ENCODE measurements at regions of chr7 and their contacts with region 1.

Region 1: DNA sequence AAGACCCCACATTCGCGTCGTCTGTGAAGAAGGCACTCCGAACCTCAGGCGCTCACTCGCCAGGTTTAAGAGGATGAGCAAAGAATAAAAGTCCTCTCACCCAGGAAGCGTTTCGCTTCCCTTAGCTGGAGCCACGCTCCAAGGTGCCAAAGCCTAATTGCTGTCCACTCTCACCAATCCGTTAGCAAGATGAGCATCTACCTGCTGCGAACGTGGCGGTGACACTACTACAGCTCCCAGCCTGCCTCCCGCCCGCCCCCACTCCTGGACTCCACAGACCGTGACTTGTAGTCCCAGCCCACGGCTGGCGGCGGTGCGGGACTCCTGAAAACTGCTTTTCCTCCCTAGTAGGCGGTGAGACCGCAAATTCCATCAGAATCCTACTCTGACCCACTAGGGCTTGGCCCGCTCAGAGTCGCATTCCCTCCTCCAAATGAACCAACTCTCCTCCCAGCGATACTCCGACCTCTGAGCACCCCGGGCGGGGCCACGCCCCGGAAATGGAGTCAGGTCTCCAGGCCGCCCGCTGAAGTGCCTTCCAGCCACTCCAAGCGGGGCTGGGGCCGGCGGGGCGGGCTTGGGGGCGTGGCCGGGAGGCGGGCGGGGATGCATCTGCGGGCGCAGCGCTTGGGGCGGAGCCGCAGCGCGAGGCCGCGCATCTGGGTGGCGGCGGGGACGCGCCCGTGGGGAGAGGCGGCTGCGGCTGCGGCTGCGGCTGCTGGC is 521 bp upstream of the PTPN12 start:
- DNase-seq: peak; percentile 74
- ATAC-seq: peak; percentile 92
- H3K4me3 ChIP-seq: peak overlapping the region; percentile 77
- H3K27ac ChIP-seq: peak overlapping the region; percentile 78
- H3K4me1 ChIP-seq: peaks cover 3% of the 10 kb centered on the region; the same call in 1 of the 2 replicates
- H3K27me3 ChIP-seq: no peaks in the 10 kb centered on the region
- CTCF ChIP-seq: no peak
- EP300 ChIP-seq: no peak
- POLR2A ChIP-seq: peak; percentile 92
- RAD21 ChIP-seq: no peak

Region 2: DNA sequence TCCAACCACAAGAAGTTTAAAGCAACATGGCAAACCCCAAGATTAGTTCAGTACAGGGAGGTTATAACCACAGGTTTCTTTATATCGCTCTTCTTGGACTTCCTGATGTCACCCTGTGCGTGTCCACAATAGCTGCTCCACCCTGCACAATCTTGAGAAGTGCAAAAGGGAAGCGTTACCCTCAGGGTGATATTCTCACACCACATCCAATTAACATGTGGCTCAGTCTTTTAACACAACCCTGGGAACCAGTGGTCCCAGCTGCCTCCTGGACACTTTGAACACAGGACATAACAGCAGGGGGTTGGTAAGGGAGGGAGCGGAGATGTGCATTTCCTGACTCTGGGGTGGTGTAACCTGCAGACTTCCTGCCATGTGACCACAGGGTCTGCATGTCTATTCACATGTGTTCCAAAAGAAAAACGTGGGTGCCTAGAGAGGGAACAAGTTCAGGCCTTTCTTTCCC is 185.0 kb before region 1 on chr7:
- CTCF ChIA-PET with region 1: no interaction called
- POLR2A ChIA-PET with region 1: no interaction called
- RAD21 ChIA-PET with region 1: no interaction called
- SMC1A ChIA-PET with region 1: no interaction called
- in situ Hi-C with region 1: no loop called
- intact Hi-C with region 1: loop called (anchors 5 kb)
- DNase-seq: peak; percentile 98
- ATAC-seq: peak; percentile 94
- H3K4me3 ChIP-seq: no peak overlapping the region
- H3K27ac ChIP-seq: peak overlapping the region; percentile 61
- H3K4me1 ChIP-seq: peaks cover 23% of the 10 kb centered on the region
- H3K27me3 ChIP-seq: no peaks in the 10 kb centered on the region
- CTCF ChIP-seq: no peak
- EP300 ChIP-seq: peak; percentile 91 to 92; a peak in 3 of 4 replicates
- POLR2A ChIP-seq: peak; percentile 56; the same call in 1 of the 2 replicates
- RAD21 ChIP-seq: 0 out of 2 replicates have a peak, but pooled peaks have one; percentile 1

Region 3: DNA sequence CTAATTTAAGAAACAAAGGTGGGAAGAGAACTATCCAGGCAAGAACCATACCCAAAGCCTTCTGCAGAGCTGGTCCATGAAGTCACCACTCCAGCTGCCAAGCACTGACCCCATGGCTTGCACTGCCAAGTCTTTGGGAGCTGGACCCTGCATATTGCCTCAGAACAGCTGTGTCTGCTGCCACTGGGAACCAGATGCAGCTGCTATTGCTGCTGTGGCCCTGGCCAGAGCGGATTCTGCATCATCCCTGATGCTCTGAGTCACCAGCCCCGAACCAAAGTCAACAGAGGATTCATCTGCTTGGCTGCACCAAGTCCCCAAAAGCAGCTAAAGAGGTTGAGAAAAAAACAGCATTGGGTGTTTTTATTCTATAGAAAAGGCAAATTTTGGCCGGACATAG is 81.2 kb before region 1 on chr7:
- CTCF ChIA-PET with region 1: no interaction called
- POLR2A ChIA-PET with region 1: interaction called, 6 read pairs
- RAD21 ChIA-PET with region 1: no interaction called
- SMC1A ChIA-PET with region 1: no interaction called
- in situ Hi-C with region 1: no loop called
- intact Hi-C with region 1: loop called (anchors 5 kb)
- DNase-seq: no peak
- ATAC-seq: no peak
- H3K4me3 ChIP-seq: no peak overlapping the region
- H3K27ac ChIP-seq: no peak overlapping the region
- H3K4me1 ChIP-seq: 0 out of 2 replicates have a peak, but pooled peaks cover 3% of the 10 kb centered on the region
- H3K27me3 ChIP-seq: no peaks in the 10 kb centered on the region
- CTCF ChIP-seq: no peak
- EP300 ChIP-seq: no peak
- POLR2A ChIP-seq: no peak
- RAD21 ChIP-seq: no peak

Region 4: GRCh38 chr7:77550586-77550985 is 14.0 kb after region 1 on chr7:
- CTCF ChIA-PET with region 1: interaction called, 4 read pairs
- POLR2A ChIA-PET with region 1: interaction called, 57 read pairs
- RAD21 ChIA-PET with region 1: interaction called, 14 read pairs
- SMC1A ChIA-PET with region 1: interaction called, 66 read pairs
- in situ Hi-C with region 1: no loop called
- intact Hi-C with region 1: no loop called
- DNase-seq: no peak
- ATAC-seq: no peak
- H3K4me3 ChIP-seq: no peak overlapping the region
- H3K27ac ChIP-seq: no peak overlapping the region
- H3K4me1 ChIP-seq: no peaks in the 10 kb centered on the region; the same call in 1 of the 2 replicates
- H3K27me3 ChIP-seq: no peaks in the 10 kb centered on the region
- CTCF ChIP-seq: no peak
- EP300 ChIP-seq: no peak
- POLR2A ChIP-seq: no peak
- RAD21 ChIP-seq: no peak

Region 5: DNA sequence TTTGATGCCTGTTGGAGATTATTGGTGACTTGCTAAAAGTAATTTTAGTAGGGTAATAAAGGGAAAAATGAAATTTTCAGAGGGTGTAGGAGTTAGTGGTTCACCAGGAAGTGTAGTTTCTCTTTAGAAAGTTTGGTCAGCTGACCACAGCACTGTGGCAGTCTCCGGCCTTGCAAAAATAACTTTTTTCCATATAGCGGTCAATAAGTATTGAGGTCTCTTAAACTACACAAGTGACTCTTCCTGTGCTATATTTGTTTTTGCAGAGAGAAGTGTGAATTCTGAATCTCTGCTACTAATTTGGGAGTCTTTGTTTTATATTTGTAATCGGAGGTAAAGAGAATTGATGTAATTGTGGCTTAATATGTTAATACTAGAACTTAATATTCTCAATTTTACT is 24.8 kb after region 1 on chr7:
- CTCF ChIA-PET with region 1: interaction called, 4 read pairs
- POLR2A ChIA-PET with region 1: interaction called, 57 read pairs
- RAD21 ChIA-PET with region 1: interaction called, 12 read pairs
- SMC1A ChIA-PET with region 1: interaction called, 66 read pairs
- in situ Hi-C with region 1: no loop called
- intact Hi-C with region 1: no loop called
- DNase-seq: peak; percentile 51
- ATAC-seq: peak; percentile 89
- H3K4me3 ChIP-seq: no peak overlapping the region
- H3K27ac ChIP-seq: 0 out of 2 replicates have a peak overlapping the region, but pooled peaks have one; percentile 4
- H3K4me1 ChIP-seq: peaks cover 13% of the 10 kb centered on the region
- H3K27me3 ChIP-seq: no peaks in the 10 kb centered on the region
- CTCF ChIP-seq: no peak
- EP300 ChIP-seq: peak; percentile 44 to 82; a peak in 3 of 4 replicates
- POLR2A ChIP-seq: no peak
- RAD21 ChIP-seq: no peak

Region 6: DNA sequence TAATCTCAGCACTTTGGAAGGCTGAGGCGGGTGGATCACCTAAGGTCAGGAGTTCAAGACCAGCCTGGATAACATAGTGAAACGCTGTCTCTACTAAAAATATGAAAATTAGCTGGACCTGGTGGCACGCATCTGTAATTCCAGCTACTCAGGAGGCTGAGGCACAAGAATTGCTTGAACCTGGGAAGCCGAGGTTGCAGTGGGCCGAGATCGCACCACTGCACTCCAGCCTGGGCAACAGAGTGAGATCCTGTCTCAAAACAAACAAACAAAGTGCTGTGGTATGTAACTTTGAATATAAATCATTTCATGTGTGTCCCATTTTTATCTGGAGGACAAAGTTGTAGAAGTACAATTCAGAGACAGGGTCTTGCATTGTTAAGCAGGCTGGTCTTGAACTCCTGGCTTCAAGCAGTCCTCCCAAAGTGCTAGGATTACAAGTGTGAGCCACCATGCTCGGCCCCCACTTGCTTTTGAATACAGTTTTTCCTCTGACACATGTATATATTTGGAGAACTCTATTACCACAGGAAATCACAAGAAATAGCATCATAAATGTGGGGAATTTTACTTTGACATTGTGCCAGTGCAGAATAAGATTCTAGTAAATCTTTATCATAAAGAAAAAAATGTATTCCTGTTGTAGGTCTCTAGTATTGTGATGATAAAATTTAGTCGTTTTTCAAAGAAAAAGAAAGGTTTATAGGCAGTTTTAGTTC is 33.1 kb after region 1 on chr7:
- CTCF ChIA-PET with region 1: no interaction called
- POLR2A ChIA-PET with region 1: interaction called, 10 read pairs
- RAD21 ChIA-PET with region 1: interaction called, 12 read pairs
- SMC1A ChIA-PET with region 1: interaction called, 58 read pairs
- in situ Hi-C with region 1: no loop called
- intact Hi-C with region 1: no loop called
- DNase-seq: no peak
- ATAC-seq: no peak; the same call in 2 of the 3 replicates
- H3K4me3 ChIP-seq: no peak overlapping the region
- H3K27ac ChIP-seq: peak overlapping the region; percentile 24
- H3K4me1 ChIP-seq: peaks cover 11% of the 10 kb centered on the region
- H3K27me3 ChIP-seq: no peaks in the 10 kb centered on the region
- CTCF ChIP-seq: no peak
- EP300 ChIP-seq: no peak
- POLR2A ChIP-seq: no peak
- RAD21 ChIP-seq: no peak